Activated naive CD4-positive, alpha-beta T cell treated with anti-CD3 and anti-CD28 coated beads for 36 hours (primary cell): ENCODE measurements at regions of chr1 and their contacts with region 1.

Region 1: GRCh38 chr1:86704458-86704971 is at the start of gene SH3GLB1:
- DNase-seq: peak; percentile 90
- H3K4me3 Mint-ChIP-seq: peak within 1 kb of the TSS; percentile 93
- H3K27ac Mint-ChIP-seq: peak within 1 kb of the TSS; percentile 98
- H3K4me1 Mint-ChIP-seq: peaks cover 40% of the 10 kb centered on the region
- H3K27me3 Mint-ChIP-seq: no peaks in the 10 kb centered on the region
- total RNA-seq, gene SH3GLB1: 45.0 to 45.5 TPM

Region 2: DNA sequence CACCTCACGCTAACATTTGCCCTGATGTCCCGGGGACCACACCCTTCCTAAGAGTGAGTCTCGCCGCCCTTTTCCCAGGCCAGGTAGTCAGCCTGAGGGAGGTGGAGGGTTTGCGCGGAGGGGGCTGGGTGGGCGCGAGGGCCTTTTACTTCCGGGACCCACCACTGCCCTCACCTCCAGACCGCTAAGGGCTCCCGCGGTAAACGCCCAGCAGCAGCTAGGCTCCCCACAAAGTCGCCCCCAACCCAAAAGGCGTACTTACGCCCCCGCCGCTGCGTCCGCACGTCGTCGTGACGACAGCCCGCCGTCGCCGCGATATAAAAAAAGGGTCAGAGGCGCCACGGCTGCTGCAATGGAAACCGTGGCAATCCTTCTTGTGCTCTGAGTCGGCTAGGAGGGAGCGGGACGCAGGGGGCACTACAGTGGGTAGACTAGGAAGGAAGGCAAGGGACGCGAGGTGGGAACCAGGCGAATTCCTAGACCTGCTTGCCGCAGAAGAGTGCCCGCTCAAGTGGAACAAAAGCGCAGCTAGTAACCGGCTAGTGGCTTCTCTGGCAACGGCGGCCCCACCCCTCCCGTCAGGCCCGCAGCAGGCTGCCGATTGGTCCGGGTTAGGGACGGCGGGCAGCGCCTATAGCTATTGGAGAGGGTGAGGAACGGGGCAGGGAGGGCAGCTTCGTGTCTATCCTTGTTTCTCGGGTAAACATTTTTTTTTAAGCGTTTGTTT is 308.6 kb before region 1 on chr1 and contains the start of gene ODF2L:
- CTCF ChIA-PET with region 1: interaction called, 5 read pairs
- intact Hi-C with region 1: loop called (anchors 1 kb)
- DNase-seq: peak; percentile 94
- H3K4me3 Mint-ChIP-seq: peak within 1 kb of the TSS; percentile 95
- H3K27ac Mint-ChIP-seq: peak within 1 kb of the TSS; percentile 91
- H3K4me1 Mint-ChIP-seq: peaks cover 44% of the 10 kb centered on the region
- H3K27me3 Mint-ChIP-seq: no peaks in the 10 kb centered on the region
- total RNA-seq, gene ODF2L: 17.8 to 18.0 TPM

Region 3: GRCh38 chr1:86741947-86742572 is 37.5 kb after region 1 on chr1:
- CTCF ChIA-PET with region 1: interaction called, 9 read pairs
- intact Hi-C with region 1: loop called (anchors 1 kb)
- DNase-seq: peak; percentile 55
- H3K4me3 Mint-ChIP-seq: no peak overlapping the region
- H3K27ac Mint-ChIP-seq: no peak overlapping the region
- H3K4me1 Mint-ChIP-seq: no peaks in the 10 kb centered on the region
- H3K27me3 Mint-ChIP-seq: no peaks in the 10 kb centered on the region

Region 4: DNA sequence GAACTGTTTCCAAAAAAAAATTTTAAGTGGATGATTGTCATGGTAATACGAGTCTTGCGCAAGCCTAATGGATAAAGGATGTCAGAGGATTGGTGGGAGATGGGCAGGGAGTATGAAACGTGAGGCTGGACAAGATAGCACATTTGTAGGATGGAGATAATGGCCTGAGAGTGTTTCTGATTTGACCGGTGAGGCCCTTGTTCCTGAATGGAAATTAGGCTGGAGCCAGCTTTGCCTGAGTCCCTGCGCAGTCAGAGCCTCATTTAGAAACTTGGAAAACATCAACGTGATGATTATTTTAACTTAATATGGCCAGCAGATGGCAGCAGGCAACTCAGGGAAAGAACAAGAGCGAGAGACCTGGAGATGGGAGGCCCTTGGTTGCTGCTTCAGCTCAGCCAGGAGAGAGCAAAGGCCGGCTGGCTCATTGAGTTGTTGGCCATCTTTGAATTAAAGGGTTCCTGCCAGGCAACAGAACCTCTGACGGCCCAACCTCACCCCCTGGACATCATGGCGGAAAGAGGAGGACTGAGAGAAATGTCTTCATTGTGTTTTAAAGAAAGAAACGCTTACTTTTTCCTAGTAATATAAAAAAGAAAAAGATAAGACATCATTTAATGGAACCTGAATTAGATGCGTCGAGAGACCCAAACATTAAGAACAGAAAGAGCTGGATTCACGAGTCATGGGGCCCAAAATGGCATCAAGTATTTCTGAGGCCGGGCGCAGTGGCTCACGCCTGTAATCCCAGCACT is 129.1 kb after region 1 on chr1:
- CTCF ChIA-PET with region 1: no interaction called
- intact Hi-C with region 1: loop called (anchors 10 kb)
- DNase-seq: peak; percentile 76
- H3K4me3 Mint-ChIP-seq: no peak overlapping the region
- H3K27ac Mint-ChIP-seq: no peak overlapping the region
- H3K4me1 Mint-ChIP-seq: peaks cover 4% of the 10 kb centered on the region
- H3K27me3 Mint-ChIP-seq: peaks cover 2% of the 10 kb centered on the region

Region 5: GRCh38 chr1:86924324-86924960 is 219.9 kb after region 1 on chr1:
- CTCF ChIA-PET with region 1: no interaction called
- intact Hi-C with region 1: no loop called
- DNase-seq: no peak
- H3K4me3 Mint-ChIP-seq: no peak overlapping the region
- H3K27ac Mint-ChIP-seq: no peak overlapping the region
- H3K4me1 Mint-ChIP-seq: peaks cover 23% of the 10 kb centered on the region
- H3K27me3 Mint-ChIP-seq: no peaks in the 10 kb centered on the region

Region 6: DNA sequence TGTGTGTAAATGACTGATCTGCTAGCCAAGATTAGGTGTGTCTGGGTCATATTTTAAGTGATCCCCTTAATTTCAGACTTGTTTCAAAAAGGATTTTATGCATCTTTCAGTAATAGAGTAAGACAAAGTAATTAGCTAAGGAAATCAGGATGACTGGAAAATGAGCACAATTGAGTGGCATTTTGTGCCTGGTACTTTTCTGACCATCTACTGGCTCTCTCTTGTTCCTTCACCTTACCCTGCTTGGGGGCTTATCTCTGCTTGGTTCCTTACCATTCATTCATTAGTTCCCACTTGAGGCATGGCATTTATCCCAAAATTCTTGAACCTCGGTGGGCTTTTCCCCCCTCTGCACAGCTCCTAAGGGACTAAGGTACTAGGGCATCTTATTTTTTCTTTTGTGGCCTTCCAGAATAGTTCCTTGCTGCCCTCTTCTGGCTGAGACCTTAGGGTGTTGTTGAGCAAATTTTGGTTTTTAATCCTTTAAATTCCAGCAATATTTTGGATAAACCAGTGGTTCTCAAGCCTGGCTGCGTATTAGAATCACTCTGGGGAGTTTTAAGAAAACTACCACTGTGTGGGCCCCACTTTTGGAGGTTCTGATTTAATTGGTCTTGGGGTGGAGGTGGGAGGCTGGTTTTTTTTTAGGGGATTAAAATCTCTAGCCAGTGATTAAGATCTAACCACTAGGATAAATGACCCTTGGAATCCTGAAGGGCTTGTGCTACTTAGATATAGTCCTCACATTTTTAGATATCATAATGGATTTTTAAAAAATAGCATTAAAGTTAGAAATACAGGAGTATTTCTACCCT is 260.7 kb after region 1 on chr1:
- CTCF ChIA-PET with region 1: interaction called, 3 read pairs
- intact Hi-C with region 1: loop called (anchors 1 kb)
- DNase-seq: peak; percentile 44
- H3K4me3 Mint-ChIP-seq: no peak overlapping the region
- H3K27ac Mint-ChIP-seq: no peak overlapping the region
- H3K4me1 Mint-ChIP-seq: no peaks in the 10 kb centered on the region
- H3K27me3 Mint-ChIP-seq: no peaks in the 10 kb centered on the region

Region 7: GRCh38 chr1:87084244-87084836 is 379.8 kb after region 1 on chr1:
- CTCF ChIA-PET with region 1: no interaction called
- intact Hi-C with region 1: loop called (anchors 1 kb)
- DNase-seq: no peak
- H3K4me3 Mint-ChIP-seq: no peak overlapping the region
- H3K27ac Mint-ChIP-seq: no peak overlapping the region
- H3K4me1 Mint-ChIP-seq: peaks cover 8% of the 10 kb centered on the region
- H3K27me3 Mint-ChIP-seq: no peaks in the 10 kb centered on the region